ENCODE measurements at regions of chr2 and their contacts with region 1.

Region 1: DNA sequence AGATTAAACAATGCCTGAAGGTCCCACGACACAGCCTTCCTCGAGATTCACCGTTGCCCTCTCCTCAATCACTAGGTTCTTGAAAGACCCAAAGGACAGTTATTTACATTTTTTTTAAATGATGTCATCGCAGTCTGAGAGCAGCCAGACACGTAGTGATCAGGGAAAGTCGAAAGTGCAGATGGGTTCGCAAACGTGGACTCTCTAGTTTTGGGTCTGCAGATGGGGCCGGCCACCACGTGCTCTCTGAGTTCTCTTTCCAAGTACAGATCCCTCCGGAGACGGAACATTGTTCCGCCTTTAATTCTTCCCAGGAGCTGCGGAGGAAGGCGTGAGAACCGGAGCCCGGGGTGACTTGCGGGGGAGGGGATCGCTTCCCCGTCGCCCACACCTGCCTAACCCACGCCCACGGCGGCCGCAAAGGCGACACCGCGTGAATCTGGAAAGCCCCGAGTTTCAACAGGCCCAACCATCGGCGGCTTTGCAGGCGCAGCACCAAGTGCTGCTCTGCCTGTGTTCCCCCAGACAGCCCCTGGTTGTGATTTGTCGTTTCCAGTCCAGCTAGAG is 54.3 kb downstream of the PKDCC start:
- DNase-seq: peak; percentile 90
- ATAC-seq: peak; percentile 57
- H3K4me3 Mint-ChIP-seq: peak overlapping the region; percentile 73
- H3K27ac Mint-ChIP-seq: peak overlapping the region; percentile 95
- H3K4me1 Mint-ChIP-seq: peaks cover 49% of the 10 kb centered on the region
- H3K27me3 Mint-ChIP-seq: no peaks in the 10 kb centered on the region
- CTCF ChIP-seq: no peak

Region 2: DNA sequence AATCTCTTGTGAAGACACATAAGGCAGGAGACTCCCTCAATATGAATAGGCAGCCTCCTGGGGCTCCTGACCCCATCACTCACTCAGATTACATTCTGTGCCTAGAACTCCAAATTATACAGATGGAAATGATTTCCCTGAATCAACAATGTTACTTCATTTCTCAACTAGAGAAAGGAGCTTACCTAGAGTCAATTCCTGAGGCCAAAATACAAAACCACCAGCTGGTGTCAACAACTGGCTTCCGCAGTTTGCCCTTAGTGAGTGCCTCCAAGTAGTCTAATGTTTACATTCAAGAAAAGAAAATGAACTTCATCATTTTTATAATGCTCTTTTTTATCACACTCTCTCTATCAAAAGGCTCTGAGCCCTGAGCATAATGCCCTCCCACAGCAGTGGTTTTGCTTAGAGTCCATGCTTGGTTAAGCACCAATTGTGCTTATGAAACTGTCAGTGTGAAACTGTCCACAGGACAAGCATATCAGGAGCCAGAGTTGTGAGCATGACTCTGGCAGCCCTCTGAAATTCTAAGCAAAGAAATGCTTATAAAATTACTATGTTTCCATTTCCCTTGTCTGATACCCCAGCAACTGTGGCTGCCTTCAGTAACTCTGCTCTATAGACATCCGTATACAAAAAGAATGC is 360.0 kb before region 1 on chr2:
- CTCF ChIA-PET with region 1: no interaction called
- POLR2A ChIA-PET with region 1: no interaction called
- intact Hi-C with region 1: no loop called
- DNase-seq: no peak
- ATAC-seq: no peak
- H3K4me3 Mint-ChIP-seq: no peak overlapping the region
- H3K27ac Mint-ChIP-seq: no peak overlapping the region
- H3K4me1 Mint-ChIP-seq: no peaks in the 10 kb centered on the region
- H3K27me3 Mint-ChIP-seq: no peaks in the 10 kb centered on the region
- CTCF ChIP-seq: no peak

Region 3: GRCh38 chr2:42072349-42073118 is 29.6 kb before region 1 on chr2:
- CTCF ChIA-PET with region 1: no interaction called
- POLR2A ChIA-PET with region 1: no interaction called
- intact Hi-C with region 1: no loop called
- DNase-seq: no peak
- ATAC-seq: no peak
- H3K4me3 Mint-ChIP-seq: no peak overlapping the region
- H3K27ac Mint-ChIP-seq: no peak overlapping the region
- H3K4me1 Mint-ChIP-seq: no peaks in the 10 kb centered on the region
- H3K27me3 Mint-ChIP-seq: peaks cover 6% of the 10 kb centered on the region
- CTCF ChIP-seq: no peak

Region 4: DNA sequence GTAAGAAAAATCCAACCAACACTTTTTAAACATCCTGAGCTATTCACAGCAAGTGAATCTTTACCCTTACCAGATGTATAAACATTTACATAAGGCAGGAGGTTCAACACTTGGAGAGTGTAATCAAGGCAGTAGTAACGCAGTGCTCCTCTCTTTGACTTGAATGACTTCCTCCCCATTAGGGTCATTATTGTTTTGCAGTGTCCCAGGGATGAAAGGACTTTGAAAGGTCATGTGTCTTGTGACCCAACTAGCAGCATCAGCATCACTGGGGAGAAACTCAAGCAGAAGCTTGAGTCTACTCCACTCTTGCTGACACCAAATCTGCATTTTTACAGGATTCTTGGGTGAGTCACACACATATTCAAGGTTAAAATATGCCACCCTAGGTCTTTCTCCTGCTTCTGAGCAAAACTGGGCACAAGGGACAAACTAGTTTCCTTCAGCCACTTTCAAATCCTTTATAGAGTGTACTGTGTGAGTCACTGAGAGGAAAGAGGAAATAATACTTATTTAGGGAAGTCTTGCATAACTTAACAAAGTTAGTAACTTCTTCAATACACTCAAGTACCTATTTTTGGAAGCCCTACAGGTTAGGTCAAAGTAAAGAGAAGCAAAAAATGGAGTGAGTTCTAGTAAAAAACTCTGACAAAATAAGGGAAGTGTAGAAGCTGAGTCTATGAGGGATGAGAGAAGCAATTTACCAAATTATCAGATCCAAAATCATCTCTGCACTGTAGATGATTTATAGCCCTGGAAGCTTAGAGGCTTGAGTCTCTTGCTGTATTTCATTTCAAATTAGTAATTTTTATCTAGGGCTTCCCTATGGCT is 16.0 kb after region 1 on chr2:
- CTCF ChIA-PET with region 1: interaction called, 7 read pairs
- POLR2A ChIA-PET with region 1: interaction called, 14 read pairs
- intact Hi-C with region 1: no loop called
- DNase-seq: no peak
- ATAC-seq: peak; percentile 85
- H3K4me3 Mint-ChIP-seq: no peak overlapping the region
- H3K27ac Mint-ChIP-seq: peak overlapping the region; percentile 1
- H3K4me1 Mint-ChIP-seq: peaks cover 38% of the 10 kb centered on the region
- H3K27me3 Mint-ChIP-seq: no peaks in the 10 kb centered on the region
- CTCF ChIP-seq: no peak

Region 5: GRCh38 chr2:42127425-42128424 is 25.6 kb after region 1 on chr2:
- CTCF ChIA-PET with region 1: interaction called, 17 read pairs
- POLR2A ChIA-PET with region 1: interaction called, 18 read pairs
- intact Hi-C with region 1: no loop called
- DNase-seq: peak; percentile 40
- ATAC-seq: peak; percentile 11
- H3K4me3 Mint-ChIP-seq: peak overlapping the region; percentile 55
- H3K27ac Mint-ChIP-seq: peak overlapping the region; percentile 65
- H3K4me1 Mint-ChIP-seq: peaks cover 80% of the 10 kb centered on the region
- H3K27me3 Mint-ChIP-seq: no peaks in the 10 kb centered on the region
- CTCF ChIP-seq: no peak

Region 6: DNA sequence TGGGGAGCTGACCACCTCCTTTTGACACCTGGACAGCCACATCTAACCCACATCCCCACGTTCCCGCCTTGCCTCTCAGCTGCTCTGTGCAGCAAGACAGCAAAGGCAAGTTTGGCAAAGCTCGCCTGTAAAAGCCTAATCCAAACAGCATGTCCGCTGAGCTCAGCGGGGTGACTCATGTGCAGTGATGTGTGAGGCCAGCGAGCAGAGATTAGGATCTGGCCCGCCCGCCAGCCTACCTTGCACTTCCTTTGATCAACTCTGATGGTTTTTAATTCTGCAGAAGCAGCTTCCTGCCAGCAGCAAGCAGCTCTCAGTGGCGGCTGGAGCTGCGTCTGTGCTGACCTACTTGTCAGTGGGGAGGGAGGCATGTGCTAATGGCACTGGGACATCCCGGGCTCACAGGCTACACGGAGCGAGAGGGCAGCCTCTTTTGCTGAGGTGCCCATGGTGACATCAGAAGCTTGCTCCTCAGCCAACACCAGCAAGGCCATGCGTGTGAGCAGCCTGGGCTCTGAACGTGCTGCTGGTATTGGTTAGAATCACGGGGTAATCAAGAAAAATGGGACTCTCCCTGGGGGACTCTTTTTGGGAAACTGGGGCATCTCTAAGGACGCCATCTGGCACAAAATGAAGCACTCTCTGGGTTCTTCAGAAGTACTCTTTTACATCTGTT is 31.0 kb after region 1 on chr2:
- CTCF ChIA-PET with region 1: interaction called, 17 read pairs
- POLR2A ChIA-PET with region 1: interaction called, 18 read pairs
- intact Hi-C with region 1: no loop called
- DNase-seq: peak; percentile 97
- ATAC-seq: peak; percentile 91
- H3K4me3 Mint-ChIP-seq: peak overlapping the region; percentile 75
- H3K27ac Mint-ChIP-seq: peak overlapping the region; percentile 97
- H3K4me1 Mint-ChIP-seq: peaks cover 78% of the 10 kb centered on the region
- H3K27me3 Mint-ChIP-seq: no peaks in the 10 kb centered on the region
- CTCF ChIP-seq: no peak

Region 7: DNA sequence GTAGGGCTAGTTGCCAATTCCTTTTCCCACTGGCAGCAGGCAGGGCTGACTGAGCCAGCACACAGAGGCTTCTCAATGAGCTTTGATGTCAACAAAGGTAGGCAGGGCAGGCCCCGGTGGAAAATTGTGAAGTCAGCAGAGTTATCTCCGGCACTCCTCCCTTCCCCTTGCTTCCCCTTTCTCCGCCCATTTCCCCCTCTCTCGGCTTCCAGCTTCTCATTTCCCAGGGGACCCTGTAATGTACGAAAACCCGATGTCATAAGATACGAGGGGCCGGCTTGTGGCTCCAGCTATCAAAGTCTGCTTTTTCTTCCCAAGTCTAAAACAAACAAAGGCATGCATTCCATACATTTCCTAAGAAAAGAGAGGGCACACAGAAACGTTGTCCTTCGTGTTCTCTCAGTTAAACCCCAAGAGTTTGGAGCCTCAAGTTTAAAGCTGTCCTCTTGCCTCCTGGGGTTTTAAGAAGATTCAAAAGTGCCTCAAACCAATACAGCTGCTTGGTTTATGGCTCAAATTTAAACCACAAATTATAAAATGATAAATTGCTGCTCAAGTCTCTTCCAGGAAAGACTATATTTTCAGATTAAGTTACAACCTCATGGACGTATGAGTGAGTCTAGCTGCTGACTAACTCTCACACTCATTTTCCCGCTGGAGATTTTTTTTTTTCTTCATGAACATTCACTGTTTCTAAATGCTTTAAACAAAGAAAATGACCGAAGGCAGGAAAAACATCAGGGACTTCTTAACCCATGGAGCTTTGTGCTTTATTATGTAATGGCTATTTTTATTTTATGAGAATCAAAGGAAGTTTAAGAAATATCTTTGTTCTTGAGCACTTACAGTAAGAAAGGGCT is 39.8 kb after region 1 on chr2:
- CTCF ChIA-PET with region 1: interaction called, 8 read pairs
- POLR2A ChIA-PET with region 1: interaction called, 9 read pairs
- intact Hi-C with region 1: loop called (anchors 5 kb)
- DNase-seq: no peak
- ATAC-seq: peak; percentile 55
- H3K4me3 Mint-ChIP-seq: peak overlapping the region; percentile 30
- H3K27ac Mint-ChIP-seq: peak overlapping the region; percentile 39
- H3K4me1 Mint-ChIP-seq: peaks cover 37% of the 10 kb centered on the region
- H3K27me3 Mint-ChIP-seq: no peaks in the 10 kb centered on the region
- CTCF ChIP-seq: no peak

Region 8: GRCh38 chr2:42163444-42164045 is 61.4 kb after region 1 on chr2:
- CTCF ChIA-PET with region 1: interaction called, 3 read pairs
- POLR2A ChIA-PET with region 1: no interaction called
- intact Hi-C with region 1: loop called (anchors 5 kb)
- DNase-seq: no peak
- ATAC-seq: no peak
- H3K4me3 Mint-ChIP-seq: no peak overlapping the region
- H3K27ac Mint-ChIP-seq: no peak overlapping the region
- H3K4me1 Mint-ChIP-seq: peaks cover 4% of the 10 kb centered on the region
- H3K27me3 Mint-ChIP-seq: no peaks in the 10 kb centered on the region
- CTCF ChIP-seq: no peak

Region 9: GRCh38 chr2:42169100-42169873 is 67.2 kb after region 1 on chr2 and contains the start of gene EML4:
- CTCF ChIA-PET with region 1: interaction called, 39 read pairs
- POLR2A ChIA-PET with region 1: interaction called, 16 read pairs
- intact Hi-C with region 1: loop called (anchors 2 kb)
- DNase-seq: peak; percentile 92
- ATAC-seq: peak; percentile 90
- H3K4me3 Mint-ChIP-seq: no peak within 1 kb of the TSS
- H3K27ac Mint-ChIP-seq: no peak within 1 kb of the TSS
- H3K4me1 Mint-ChIP-seq: peaks cover 22% of the 10 kb centered on the region
- H3K27me3 Mint-ChIP-seq: no peaks in the 10 kb centered on the region
- CTCF ChIP-seq: no peak
- total RNA-seq, gene EML4: 58.2 to 59.7 TPM